ENCODE measurements at regions of chr17 and their contacts with region 1.

Region 1: DNA sequence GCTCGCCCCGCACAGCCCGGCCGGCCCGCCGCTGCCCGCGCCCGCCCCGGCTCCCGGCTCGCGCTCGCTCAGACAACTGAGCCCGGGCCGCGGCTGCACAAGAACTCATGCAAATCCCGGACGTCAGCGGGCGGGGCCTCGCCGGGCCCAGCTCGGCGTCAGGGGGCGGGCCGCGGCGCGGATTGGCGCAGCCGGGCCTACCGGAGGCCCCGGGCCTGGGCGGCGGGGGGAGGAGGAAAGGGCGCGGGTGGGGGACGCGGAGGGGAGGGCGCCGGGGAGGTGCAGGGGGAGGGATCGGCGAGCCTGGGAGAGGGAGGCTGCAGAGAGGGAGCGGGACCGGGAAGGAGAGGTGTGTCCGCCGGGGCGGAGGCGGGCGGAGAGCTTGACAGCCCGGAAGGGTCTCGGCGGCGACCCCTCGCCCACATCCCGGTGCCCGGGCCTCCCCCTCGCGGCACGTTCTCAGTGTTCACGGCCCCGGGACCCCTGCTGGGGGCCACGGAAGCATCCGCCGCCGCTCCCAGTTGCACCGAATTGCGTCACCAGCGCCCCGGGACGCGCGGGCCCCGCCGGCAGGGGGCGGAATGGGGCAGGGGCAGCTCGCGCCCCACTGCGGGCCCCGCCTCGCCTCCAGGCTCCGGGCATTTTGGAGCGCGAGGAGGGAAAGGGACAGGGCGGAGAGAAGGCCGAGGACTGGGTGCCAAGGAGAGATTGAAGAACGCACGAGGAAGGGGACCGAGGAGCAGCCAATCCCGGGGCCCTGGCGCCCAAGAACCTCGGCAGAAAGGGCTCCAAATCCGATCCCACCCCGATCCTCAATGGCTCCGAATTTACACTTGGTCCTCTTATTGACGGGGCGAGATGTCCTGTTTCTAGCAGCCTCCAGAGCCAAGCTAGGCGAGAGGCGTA is at the start of gene CBX4:
- DNase-seq: peak; percentile 87
- ATAC-seq: peak; percentile 77
- H3K4me3 Mint-ChIP-seq: peak within 1 kb of the TSS; percentile 95
- H3K27ac Mint-ChIP-seq: peak within 1 kb of the TSS; percentile 95
- H3K4me1 Mint-ChIP-seq: peaks cover 64% of the 10 kb centered on the region
- H3K27me3 Mint-ChIP-seq: peaks cover 20% of the 10 kb centered on the region
- CTCF ChIP-seq: peak; percentile 46
- total RNA-seq, gene CBX4: 55.6 and 56.3 TPM in 2 replicates

Region 2: GRCh38 chr17:79732804-79733691 is 106.6 kb before region 1 on chr17:
- CTCF ChIA-PET with region 1: no interaction called
- POLR2A ChIA-PET with region 1: interaction called, 5 read pairs
- intact Hi-C with region 1: loop called (anchors 5 kb)
- DNase-seq: peak; percentile 48
- ATAC-seq: peak; percentile 80
- H3K4me3 Mint-ChIP-seq: peak overlapping the region; percentile 90
- H3K27ac Mint-ChIP-seq: peak overlapping the region; percentile 92
- H3K4me1 Mint-ChIP-seq: peaks cover 47% of the 10 kb centered on the region
- H3K27me3 Mint-ChIP-seq: no peaks in the 10 kb centered on the region
- CTCF ChIP-seq: no peak

Region 3: GRCh38 chr17:79796763-79797491 is 42.7 kb before region 1 on chr17 and contains the start of gene CBX8:
- CTCF ChIA-PET with region 1: interaction called, 5 read pairs
- POLR2A ChIA-PET with region 1: interaction called, 65 read pairs
- intact Hi-C with region 1: loop called (anchors 2 kb)
- DNase-seq: peak; percentile 95
- ATAC-seq: peak; percentile 88
- H3K4me3 Mint-ChIP-seq: peak within 1 kb of the TSS; percentile 85
- H3K27ac Mint-ChIP-seq: peak within 1 kb of the TSS; percentile 87
- H3K4me1 Mint-ChIP-seq: peaks cover 34% of the 10 kb centered on the region
- H3K27me3 Mint-ChIP-seq: peaks cover 32% of the 10 kb centered on the region
- CTCF ChIP-seq: no peak
- total RNA-seq, gene CBX8: 4.0 and 4.9 TPM in 2 replicates

Region 4: GRCh38 chr17:79810130-79811010 is 29.2 kb before region 1 on chr17:
- CTCF ChIA-PET with region 1: interaction called, 8 read pairs
- POLR2A ChIA-PET with region 1: interaction called, 212 read pairs
- intact Hi-C with region 1: loop called (anchors 1 kb)
- DNase-seq: no peak
- ATAC-seq: peak; percentile 86
- H3K4me3 Mint-ChIP-seq: peak overlapping the region; percentile 15
- H3K27ac Mint-ChIP-seq: peak overlapping the region; percentile 46
- H3K4me1 Mint-ChIP-seq: peaks cover 36% of the 10 kb centered on the region
- H3K27me3 Mint-ChIP-seq: peaks cover 51% of the 10 kb centered on the region
- CTCF ChIP-seq: no peak

Region 5: DNA sequence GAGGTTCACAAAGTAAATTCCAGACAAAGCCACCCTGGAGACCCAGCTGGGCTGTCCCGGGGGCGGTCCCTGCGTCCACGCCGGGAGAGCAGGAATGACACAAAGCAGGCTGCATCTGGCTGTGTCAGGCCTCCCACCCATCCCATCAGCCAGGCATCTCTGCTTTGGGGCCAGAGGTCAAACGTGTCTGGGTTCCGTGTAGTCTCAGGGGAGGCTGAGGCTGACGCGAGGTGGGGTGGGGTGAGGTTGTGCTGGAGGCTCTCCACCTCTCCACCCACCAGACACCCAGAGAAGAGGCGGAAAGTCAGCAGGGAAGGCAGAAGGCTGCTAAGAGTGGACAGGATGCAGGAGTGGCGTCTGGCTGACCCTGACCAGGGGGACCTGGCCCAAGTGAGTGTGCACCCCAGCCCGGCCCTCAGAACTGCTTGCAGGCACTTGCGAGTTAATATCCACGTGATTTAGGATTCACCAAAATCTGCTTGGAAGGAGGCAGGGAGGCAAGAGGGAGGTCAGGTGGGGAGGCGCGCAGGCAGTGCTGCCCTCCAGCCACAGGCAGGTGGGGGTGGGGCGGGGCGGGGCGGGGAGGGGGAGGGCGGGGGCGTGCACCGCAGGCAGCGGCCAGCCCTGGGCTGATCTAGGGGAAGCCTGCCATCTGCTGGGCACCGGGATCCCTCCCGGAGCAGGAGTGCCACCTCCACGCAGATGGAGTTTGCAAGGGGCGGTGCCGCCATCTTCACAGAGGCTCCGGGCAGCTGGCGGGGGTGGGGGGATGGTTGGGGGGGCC is 151.7 kb after region 1 on chr17:
- CTCF ChIA-PET with region 1: no interaction called
- POLR2A ChIA-PET with region 1: interaction called, 13 read pairs
- intact Hi-C with region 1: loop called (anchors 2 kb)
- DNase-seq: peak; percentile 67
- ATAC-seq: peak; percentile 91
- H3K4me3 Mint-ChIP-seq: peak overlapping the region; percentile 69
- H3K27ac Mint-ChIP-seq: no peak overlapping the region
- H3K4me1 Mint-ChIP-seq: peaks cover 35% of the 10 kb centered on the region
- H3K27me3 Mint-ChIP-seq: peaks cover 2% of the 10 kb centered on the region
- CTCF ChIP-seq: no peak

Region 6: GRCh38 chr17:80035943-80036714 is 196.5 kb after region 1 on chr17 and contains the start of gene CCDC40:
- CTCF ChIA-PET with region 1: no interaction called
- POLR2A ChIA-PET with region 1: no interaction called
- intact Hi-C with region 1: loop called (anchors 5 kb)
- DNase-seq: peak; percentile 80
- ATAC-seq: peak; percentile 83
- H3K4me3 Mint-ChIP-seq: peak within 1 kb of the TSS; percentile 89
- H3K27ac Mint-ChIP-seq: peak within 1 kb of the TSS; percentile 86
- H3K4me1 Mint-ChIP-seq: peaks cover 15% of the 10 kb centered on the region
- H3K27me3 Mint-ChIP-seq: peaks cover 3% of the 10 kb centered on the region
- CTCF ChIP-seq: no peak
- total RNA-seq, gene CCDC40: 0.46 and 0.55 TPM in 2 replicates

Region 7: GRCh38 chr17:80706463-80706867 is 866.8 kb after region 1 on chr17:
- CTCF ChIA-PET with region 1: no interaction called
- POLR2A ChIA-PET with region 1: no interaction called
- intact Hi-C with region 1: no loop called
- DNase-seq: no peak
- ATAC-seq: no peak
- H3K4me3 Mint-ChIP-seq: no peak overlapping the region
- H3K27ac Mint-ChIP-seq: no peak overlapping the region
- H3K4me1 Mint-ChIP-seq: peaks cover 44% of the 10 kb centered on the region
- H3K27me3 Mint-ChIP-seq: no peaks in the 10 kb centered on the region
- CTCF ChIP-seq: no peak

Measured in activated B cell treated with CpG ODN at 0.5 μM for 24 hours (primary cell).